GM12878 (cell line): ENCODE measurements at regions of chr16 and their contacts with region 1.

Region 1: DNA sequence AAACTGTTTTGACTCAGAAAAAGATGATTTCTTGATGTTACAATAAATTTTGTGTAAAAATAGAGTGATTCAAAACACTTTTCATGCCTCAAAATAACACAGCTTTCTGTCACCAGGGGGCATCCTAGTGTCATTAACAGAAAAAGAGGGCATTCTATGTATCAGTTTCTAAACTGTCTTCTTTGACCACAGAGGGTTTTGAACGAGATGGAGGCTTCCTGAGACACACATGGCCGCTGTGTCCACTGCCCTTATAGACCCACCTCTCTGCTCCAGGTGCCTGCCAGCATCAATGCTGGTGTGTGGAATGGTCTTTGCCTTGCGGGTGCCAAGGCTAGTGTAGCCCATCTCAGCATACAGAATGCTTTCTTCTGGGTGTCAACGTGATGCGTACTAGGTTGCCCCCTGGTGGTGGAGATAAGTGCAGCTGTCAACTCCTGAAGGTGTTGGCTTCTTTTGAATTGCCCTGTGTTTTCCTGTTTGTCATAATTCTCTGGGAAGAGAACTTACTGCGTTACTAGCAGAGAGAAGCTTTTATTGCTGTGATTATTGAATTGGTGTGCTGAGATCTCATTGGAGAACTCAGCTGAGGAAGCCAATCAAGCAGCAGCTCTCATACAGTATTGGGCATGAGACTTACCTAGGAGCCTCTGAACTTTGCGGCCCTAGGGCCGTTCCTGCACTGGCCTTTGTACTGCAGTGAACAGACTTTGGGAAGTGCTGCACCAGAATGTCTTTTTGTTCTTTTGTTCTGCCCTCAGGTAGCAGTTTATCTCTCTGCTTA is 38.6 kb downstream of the USP10 start:
- DNase-seq: peak; percentile 71
- ATAC-seq: peak; percentile 95
- H3K4me3 ChIP-seq: no peak overlapping the region
- H3K27ac ChIP-seq: no peak overlapping the region
- H3K4me1 ChIP-seq: peaks cover 14% of the 10 kb centered on the region
- H3K27me3 ChIP-seq: no peaks in the 10 kb centered on the region
- CTCF ChIP-seq: peak; percentile 82 to 96 (median 83)
- EP300 ChIP-seq: no peak
- POLR2A ChIP-seq: no peak
- RAD21 ChIP-seq: peak; percentile 62

Region 2: DNA sequence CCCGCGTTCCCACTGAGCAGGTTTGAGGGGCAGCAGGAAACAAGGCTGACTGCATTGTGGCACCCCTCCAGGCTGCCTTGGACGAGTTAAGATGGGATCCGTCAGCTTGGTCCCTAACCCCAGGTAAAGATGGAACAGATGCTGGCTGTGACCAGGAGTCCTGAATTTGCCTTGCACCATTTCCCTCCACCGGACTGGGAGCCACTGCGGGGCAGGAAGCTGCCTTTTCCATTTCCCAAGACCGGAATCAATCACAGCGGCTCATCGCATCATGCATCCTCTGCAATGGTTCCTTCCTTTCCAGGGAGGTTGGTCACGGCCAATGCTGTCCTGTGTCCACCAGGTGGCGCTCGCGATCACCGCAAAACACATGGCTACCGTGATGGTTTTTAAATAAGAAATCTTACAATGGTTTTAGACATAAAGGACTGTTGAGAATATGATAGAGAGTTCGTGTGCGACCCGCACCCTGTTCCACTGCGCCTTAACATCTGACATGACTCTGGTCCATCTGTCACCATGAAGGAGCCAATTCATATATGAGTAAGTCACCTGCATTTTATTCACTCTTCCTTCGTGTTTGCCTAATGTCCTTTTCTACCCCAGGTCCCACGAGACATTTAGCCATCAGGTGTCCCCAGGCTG is 227.1 kb before region 1 on chr16:
- CTCF ChIA-PET with region 1: interaction called, 33 read pairs
- POLR2A ChIA-PET with region 1: no interaction called
- RAD21 ChIA-PET with region 1: interaction called, 7 read pairs
- SMC1A ChIA-PET with region 1: interaction called, 21 read pairs
- in situ Hi-C with region 1: no loop called
- intact Hi-C with region 1: no loop called
- DNase-seq: peak; percentile 62
- ATAC-seq: peak; percentile 37
- H3K4me3 ChIP-seq: no peak overlapping the region
- H3K27ac ChIP-seq: peak overlapping the region; percentile 63
- H3K4me1 ChIP-seq: peaks cover 64% of the 10 kb centered on the region
- H3K27me3 ChIP-seq: no peaks in the 10 kb centered on the region
- CTCF ChIP-seq: peak; percentile 93 to 96 (median 94)
- EP300 ChIP-seq: no peak
- POLR2A ChIP-seq: no peak
- RAD21 ChIP-seq: peak; percentile 96

Region 3: GRCh38 chr16:84663433-84664101 is 74.9 kb before region 1 on chr16:
- CTCF ChIA-PET with region 1: interaction called, 10 read pairs
- POLR2A ChIA-PET with region 1: no interaction called
- RAD21 ChIA-PET with region 1: interaction called, 6 read pairs
- SMC1A ChIA-PET with region 1: interaction called, 3 read pairs
- in situ Hi-C with region 1: no loop called
- intact Hi-C with region 1: no loop called
- DNase-seq: peak; percentile 76
- ATAC-seq: peak; percentile 96
- H3K4me3 ChIP-seq: no peak overlapping the region
- H3K27ac ChIP-seq: 0 out of 2 replicates have a peak overlapping the region, but pooled peaks have one; percentile 38
- H3K4me1 ChIP-seq: peaks cover 22% of the 10 kb centered on the region
- H3K27me3 ChIP-seq: no peaks in the 10 kb centered on the region
- CTCF ChIP-seq: no peak
- EP300 ChIP-seq: no peak
- POLR2A ChIP-seq: 0 out of 2 replicates have a peak, but pooled peaks have one; percentile 18
- RAD21 ChIP-seq: no peak

Region 4: GRCh38 chr16:84699712-84700445 is 38.6 kb before region 1 on chr16 and contains the start of gene USP10:
- CTCF ChIA-PET with region 1: interaction called, 15 read pairs
- POLR2A ChIA-PET with region 1: no interaction called
- RAD21 ChIA-PET with region 1: interaction called, 3 read pairs
- SMC1A ChIA-PET with region 1: interaction called, 6 read pairs
- in situ Hi-C with region 1: no loop called
- intact Hi-C with region 1: no loop called
- DNase-seq: no peak
- ATAC-seq: peak; percentile 82
- H3K4me3 ChIP-seq: peak within 1 kb of the TSS; percentile 91
- H3K27ac ChIP-seq: peak within 1 kb of the TSS; percentile 86
- H3K4me1 ChIP-seq: peaks cover 3% of the 10 kb centered on the region; the same call in 1 of the 2 replicates
- H3K27me3 ChIP-seq: no peaks in the 10 kb centered on the region
- CTCF ChIP-seq: no peak
- EP300 ChIP-seq: no peak
- POLR2A ChIP-seq: peak; percentile 93
- RAD21 ChIP-seq: no peak
- polyA plus RNA-seq, gene USP10: 46.1 to 47.7 TPM

Region 5: DNA sequence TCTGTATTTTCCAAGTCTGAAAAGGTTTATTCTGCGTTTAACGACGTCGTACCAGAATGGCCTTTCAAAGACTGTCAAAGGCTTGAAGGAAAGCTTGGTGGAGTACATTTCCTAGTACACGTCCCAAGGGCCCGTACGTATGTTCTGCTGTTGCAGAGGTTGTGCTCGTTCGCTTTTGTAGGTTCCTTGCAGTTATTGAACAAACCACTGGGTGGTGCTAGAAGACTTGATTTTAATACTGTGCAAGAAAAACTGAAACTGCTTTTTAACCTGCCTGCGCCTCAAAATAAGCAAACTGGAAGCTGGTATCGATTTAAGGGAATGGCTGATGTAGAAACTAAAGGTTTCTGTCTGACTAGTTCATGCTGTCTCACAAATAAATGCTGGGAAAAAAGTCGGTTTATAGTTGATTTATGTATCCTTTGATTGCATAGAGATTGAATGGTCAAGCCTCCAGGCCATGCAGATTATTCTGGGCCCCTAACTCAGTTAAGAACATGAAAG is 16.0 kb after region 1 on chr16:
- CTCF ChIA-PET with region 1: interaction called, 239 read pairs
- POLR2A ChIA-PET with region 1: interaction called, 3 read pairs
- RAD21 ChIA-PET with region 1: interaction called, 52 read pairs
- SMC1A ChIA-PET with region 1: interaction called, 129 read pairs
- in situ Hi-C with region 1: no loop called
- intact Hi-C with region 1: no loop called
- DNase-seq: peak; percentile 78
- ATAC-seq: peak; percentile 82
- H3K4me3 ChIP-seq: no peak overlapping the region; the same call in 1 of the 2 replicates
- H3K27ac ChIP-seq: peak overlapping the region; percentile 56
- H3K4me1 ChIP-seq: peaks cover 54% of the 10 kb centered on the region
- H3K27me3 ChIP-seq: no peaks in the 10 kb centered on the region
- CTCF ChIP-seq: peak; percentile 70 to 85 (median 80)
- EP300 ChIP-seq: no peak
- POLR2A ChIP-seq: no peak
- RAD21 ChIP-seq: peak; percentile 81

Region 6: GRCh38 chr16:84952335-84953189 is 214.1 kb after region 1 on chr16:
- CTCF ChIA-PET with region 1: interaction called, 30 read pairs
- POLR2A ChIA-PET with region 1: no interaction called
- RAD21 ChIA-PET with region 1: interaction called, 4 read pairs
- SMC1A ChIA-PET with region 1: interaction called, 7 read pairs
- in situ Hi-C with region 1: no loop called
- intact Hi-C with region 1: no loop called
- DNase-seq: peak; percentile 40
- ATAC-seq: peak; percentile 94
- H3K4me3 ChIP-seq: no peak overlapping the region
- H3K27ac ChIP-seq: no peak overlapping the region
- H3K4me1 ChIP-seq: peaks cover 4% of the 10 kb centered on the region; the same call in 1 of the 2 replicates
- H3K27me3 ChIP-seq: no peaks in the 10 kb centered on the region; a peak in 1 of 4 replicates
- CTCF ChIP-seq: peak; percentile 85
- EP300 ChIP-seq: no peak
- POLR2A ChIP-seq: no peak
- RAD21 ChIP-seq: peak; percentile 58

Region 7: DNA sequence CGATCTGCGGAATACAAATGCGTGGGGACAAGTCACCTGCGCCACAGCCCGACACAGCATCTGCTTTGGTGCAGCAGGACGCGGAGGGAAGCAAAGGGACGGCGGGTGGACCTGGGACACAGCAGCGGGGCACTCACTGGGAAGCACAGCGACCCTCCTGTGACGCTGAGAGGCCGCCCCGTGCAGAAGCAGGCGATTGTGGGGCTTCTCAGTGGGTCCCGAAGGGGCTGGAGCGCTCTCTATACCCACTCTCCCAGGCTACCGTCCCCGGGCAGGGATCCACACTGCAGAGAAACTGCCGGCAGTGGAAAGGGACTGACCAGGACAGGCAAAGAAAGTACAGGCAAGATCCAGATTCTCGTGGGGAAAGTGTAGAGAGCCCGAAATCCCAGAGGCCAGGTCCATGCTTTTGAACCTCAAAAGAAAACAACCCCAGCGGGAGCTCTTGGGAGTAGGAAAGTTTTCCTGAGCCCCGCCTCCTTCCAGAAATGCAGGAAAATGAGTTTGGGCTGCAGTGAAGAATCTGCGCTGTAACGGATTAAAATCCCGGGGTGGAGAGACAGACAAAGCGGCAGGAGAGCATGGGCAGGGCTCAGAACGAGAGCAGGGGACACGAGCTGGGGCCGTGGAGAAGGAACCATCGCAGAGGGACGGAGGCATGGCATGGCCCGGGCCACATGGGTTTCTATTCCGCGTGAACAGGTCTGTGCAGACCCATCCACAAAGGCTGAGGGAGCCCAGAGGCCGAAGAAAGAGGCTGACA is 1073.8 kb after region 1 on chr16:
- CTCF ChIA-PET with region 1: no interaction called
- POLR2A ChIA-PET with region 1: no interaction called
- RAD21 ChIA-PET with region 1: no interaction called
- SMC1A ChIA-PET with region 1: no interaction called
- in situ Hi-C with region 1: no loop called
- intact Hi-C with region 1: no loop called
- DNase-seq: no peak
- ATAC-seq: no peak
- H3K4me3 ChIP-seq: no peak overlapping the region
- H3K27ac ChIP-seq: no peak overlapping the region
- H3K4me1 ChIP-seq: no peaks in the 10 kb centered on the region
- H3K27me3 ChIP-seq: peaks cover 0 to 3% of the 10 kb centered on the region in 2 experiments; a peak in 1 of 4 replicates
- CTCF ChIP-seq: no peak
- EP300 ChIP-seq: no peak
- POLR2A ChIP-seq: no peak
- RAD21 ChIP-seq: no peak